Stomach (tissue), 19 donors: ENCODE measurements at regions of chr18 and their contacts with region 1.

Region 1: DNA sequence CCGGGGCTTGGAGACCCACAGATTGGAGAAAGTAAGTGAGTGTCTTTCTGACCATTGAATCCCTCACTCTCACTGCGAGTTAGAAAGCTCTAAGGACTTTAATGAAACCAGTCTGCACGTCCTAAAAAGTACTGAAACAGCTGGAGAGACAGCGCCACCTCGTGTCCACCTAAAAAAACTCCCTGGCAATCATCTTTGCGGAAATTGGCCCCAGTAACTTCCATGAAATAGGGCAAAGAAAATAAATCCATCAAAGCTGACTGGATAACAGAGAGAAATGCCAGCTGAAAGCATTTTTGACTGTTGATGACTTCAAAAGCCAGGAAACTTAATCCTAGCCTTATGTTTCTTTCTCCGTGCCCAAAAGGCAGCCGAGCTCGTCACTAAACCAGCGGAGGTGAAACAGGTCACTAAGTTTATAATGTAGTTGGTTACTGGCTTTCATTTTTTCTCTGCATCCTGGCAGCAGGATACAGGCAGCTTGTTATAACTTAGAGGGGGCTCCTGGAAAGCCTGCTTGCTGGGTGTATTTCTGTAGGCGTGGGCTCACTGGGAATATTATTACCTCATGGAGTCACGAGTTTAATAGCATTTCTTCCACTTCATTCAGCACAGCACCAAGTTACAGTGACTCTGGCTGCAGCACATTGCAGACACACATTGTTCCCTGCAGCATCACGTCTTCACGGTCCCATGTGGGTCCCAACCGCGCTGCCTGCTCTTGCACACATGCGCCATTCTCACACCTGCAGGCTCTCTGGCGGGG is 266.5 kb downstream of the HRH4 start:
- DNase-seq: peak; percentile 53 to 94
- H3K4me3 ChIP-seq: peak overlapping the region in 2 of 4 donors; percentile 0 to 10
- H3K27ac ChIP-seq: no peak overlapping the region
- H3K4me1 ChIP-seq: peaks cover 0 to 10% (median 4%) of the 10 kb centered on the region in 4 donors
- H3K27me3 ChIP-seq: peaks cover 0 to 20% (median 0%) of the 10 kb centered on the region in 3 donors
- CTCF ChIP-seq: peak in 5 of 7 experiments; percentile 62 to 85 (median 73)
- EP300 ChIP-seq: no peak
- POLR2A ChIP-seq: no peak

Region 2: DNA sequence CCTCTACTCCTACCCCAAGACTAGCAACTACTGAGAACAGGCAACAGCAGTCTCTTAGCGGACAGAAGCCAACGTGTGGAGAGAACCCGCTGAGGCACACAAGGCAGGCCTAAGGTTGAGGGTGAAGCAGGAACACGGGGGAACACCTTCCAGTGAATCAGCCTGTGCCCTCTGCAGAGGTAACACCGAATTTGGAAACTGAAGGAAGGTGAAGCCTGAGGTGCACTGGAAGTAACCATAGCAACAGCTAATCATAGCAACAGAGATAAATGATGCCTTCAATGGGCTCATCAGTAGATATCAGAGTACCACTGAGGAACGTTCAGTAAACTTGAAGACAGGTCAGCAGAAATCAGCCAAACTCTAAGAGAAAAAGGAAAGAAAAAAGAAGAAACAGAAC is 372.6 kb before region 1 on chr18:
- intact Hi-C with region 1: loop called (anchors 10 kb)
- DNase-seq: no peak
- H3K4me3 ChIP-seq: no peak overlapping the region
- H3K27ac ChIP-seq: no peak overlapping the region
- H3K4me1 ChIP-seq: no peaks in the 10 kb centered on the region
- H3K27me3 ChIP-seq: no peaks in the 10 kb centered on the region
- CTCF ChIP-seq: no peak
- EP300 ChIP-seq: no peak
- POLR2A ChIP-seq: no peak

Region 3: GRCh38 chr18:24488824-24489493 is 238.0 kb before region 1 on chr18:
- intact Hi-C with region 1: loop called (anchors 10 kb)
- DNase-seq: peak in 1 of 2 donors; percentile 66
- H3K4me3 ChIP-seq: no peak overlapping the region
- H3K27ac ChIP-seq: no peak overlapping the region
- H3K4me1 ChIP-seq: peaks cover 0 to 10% (median 3%) of the 10 kb centered on the region in 4 donors
- H3K27me3 ChIP-seq: peaks cover 0 to 4% (median 0%) of the 10 kb centered on the region in 3 donors
- CTCF ChIP-seq: peak in 5 of 7 experiments; percentile 62 to 83 (median 75)
- EP300 ChIP-seq: no peak
- POLR2A ChIP-seq: no peak

Region 4: GRCh38 chr18:24595561-24596031 is 131.3 kb before region 1 on chr18:
- intact Hi-C with region 1: loop called (anchors 5 kb)
- DNase-seq: no peak
- H3K4me3 ChIP-seq: no peak overlapping the region
- H3K27ac ChIP-seq: no peak overlapping the region
- H3K4me1 ChIP-seq: no peaks in the 10 kb centered on the region
- H3K27me3 ChIP-seq: no peaks in the 10 kb centered on the region
- CTCF ChIP-seq: no peak
- EP300 ChIP-seq: no peak
- POLR2A ChIP-seq: no peak